ENCODE measurements at regions of chr9 and their contacts with region 1.

Region 1: DNA sequence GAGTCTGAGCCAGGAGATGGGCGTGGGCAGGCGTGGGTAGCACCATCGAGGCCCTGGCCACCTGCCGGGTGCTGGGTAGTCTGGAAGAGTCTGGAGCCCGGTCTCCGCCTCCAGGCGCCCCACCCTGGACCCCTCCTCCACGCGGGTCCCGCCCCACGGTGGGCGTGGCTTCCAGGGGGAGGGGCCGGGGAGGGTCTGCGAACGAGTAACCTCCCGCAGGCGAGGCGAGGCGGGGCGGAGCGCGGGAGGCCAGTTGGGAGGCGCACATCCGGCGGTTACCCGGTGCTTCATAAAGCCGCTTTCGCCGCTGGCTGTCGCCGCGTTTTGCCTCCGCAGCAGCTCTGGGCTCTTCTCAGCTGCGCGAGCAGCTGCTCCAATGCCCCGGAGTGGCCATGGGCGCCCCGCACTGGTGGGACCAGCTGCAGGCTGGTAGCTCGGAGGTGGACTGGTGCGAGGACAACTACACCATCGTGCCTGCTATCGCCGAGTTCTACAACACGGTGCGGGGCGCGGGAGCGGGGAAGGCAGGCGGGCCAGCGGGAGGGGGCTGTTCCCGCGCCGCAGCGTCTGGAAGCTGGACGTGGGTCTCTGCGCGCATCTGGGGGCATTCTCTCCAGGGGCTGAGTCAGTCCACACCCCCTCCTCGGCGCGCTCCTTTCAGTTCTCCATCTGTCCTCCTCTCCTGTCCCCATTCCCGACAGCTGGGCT is at the start of gene ACER2:
- DNase-seq: peak; percentile 91 to 99 (median 95)
- ATAC-seq: peak; percentile 99
- H3K4me3 ChIP-seq: peak within 1 kb of the TSS; percentile 96
- H3K4me3 Mint-ChIP-seq: peak within 1 kb of the TSS; percentile 92 to 99 (median 94)
- H3K27ac ChIP-seq: peak within 1 kb of the TSS; percentile 72
- H3K27ac Mint-ChIP-seq: peak within 1 kb of the TSS; percentile 74 to 94 (median 82)
- H3K4me1 ChIP-seq: peaks cover 0 to 6% of the 10 kb centered on the region in 2 donors
- H3K4me1 Mint-ChIP-seq: peaks cover 8 to 30% (median 19%) of the 10 kb centered on the region in 7 donors
- H3K27me3 ChIP-seq: no peaks in the 10 kb centered on the region
- H3K27me3 Mint-ChIP-seq: peaks cover 0 to 9% (median 0%) of the 10 kb centered on the region in 5 donors
- total RNA-seq, gene ACER2: 2.0 to 5.7 (median 2.8) TPM

Region 2: GRCh38 chr9:19122490-19123042 is 286.3 kb before region 1 on chr9:
- CTCF ChIA-PET with region 1: no interaction called
- POLR2A ChIA-PET with region 1: no interaction called
- intact Hi-C with region 1: loop called in 1 of 2 experiments (anchors 2 kb)
- DNase-seq: no peak
- ATAC-seq: no peak
- H3K4me3 ChIP-seq: no peak overlapping the region
- H3K4me3 Mint-ChIP-seq: peak overlapping the region in 3 of 10 donors; percentile 17 to 93 (median 88)
- H3K27ac ChIP-seq: no peak overlapping the region
- H3K27ac Mint-ChIP-seq: peak overlapping the region in 6 of 9 donors; percentile 51 to 96 (median 73)
- H3K4me1 ChIP-seq: peaks cover 22 to 28% of the 10 kb centered on the region in 2 donors
- H3K4me1 Mint-ChIP-seq: peaks cover 20 to 73% (median 39%) of the 10 kb centered on the region in 7 donors
- H3K27me3 ChIP-seq: no peaks in the 10 kb centered on the region
- H3K27me3 Mint-ChIP-seq: no peaks in the 10 kb centered on the region

Region 3: GRCh38 chr9:19371942-19372341 is 36.9 kb before region 1 on chr9:
- CTCF ChIA-PET with region 1: no interaction called
- POLR2A ChIA-PET with region 1: no interaction called
- intact Hi-C with region 1: loop called in 1 of 2 experiments (anchors 5 kb)
- DNase-seq: no peak
- ATAC-seq: no peak
- H3K4me3 ChIP-seq: no peak overlapping the region
- H3K4me3 Mint-ChIP-seq: no peak overlapping the region
- H3K27ac ChIP-seq: no peak overlapping the region
- H3K27ac Mint-ChIP-seq: peak overlapping the region in 2 of 9 donors; percentile 17 to 43
- H3K4me1 ChIP-seq: no peaks in the 10 kb centered on the region
- H3K4me1 Mint-ChIP-seq: peaks cover 0 to 16% (median 1%) of the 10 kb centered on the region in 7 donors
- H3K27me3 ChIP-seq: no peaks in the 10 kb centered on the region
- H3K27me3 Mint-ChIP-seq: no peaks in the 10 kb centered on the region

Region 4: GRCh38 chr9:19441730-19442129 is 32.9 kb after region 1 on chr9:
- CTCF ChIA-PET with region 1: no interaction called
- POLR2A ChIA-PET with region 1: interaction called, 3 read pairs
- intact Hi-C with region 1: loop called (anchors 1 to 2 kb)
- DNase-seq: peak in 3 of 9 donors; percentile 5 to 12 (median 9)
- ATAC-seq: peak; percentile 57
- H3K4me3 ChIP-seq: no peak overlapping the region
- H3K4me3 Mint-ChIP-seq: peak overlapping the region; percentile 41 to 84 (median 73)
- H3K27ac ChIP-seq: peak overlapping the region; percentile 51
- H3K27ac Mint-ChIP-seq: peak overlapping the region; percentile 27 to 90 (median 86)
- H3K4me1 ChIP-seq: peaks cover 0 to 9% of the 10 kb centered on the region in 2 donors
- H3K4me1 Mint-ChIP-seq: peaks cover 9 to 21% (median 15%) of the 10 kb centered on the region in 7 donors
- H3K27me3 ChIP-seq: no peaks in the 10 kb centered on the region
- H3K27me3 Mint-ChIP-seq: no peaks in the 10 kb centered on the region